Activated CD4-positive, alpha-beta T cell treated with anti-CD3 and anti-CD28 coated beads, Interleukin-2, amount 10 ng/mL, durations not matched to agents 7 days and 5 days (primary cell): ENCODE measurements at regions of chr11 and their contacts with region 1.

Region 1: GRCh38 chr11:67439321-67439883 is 1.9 kb upstream of the PTPRCAP start:
- DNase-seq: peak; percentile 48
- H3K4me3 Mint-ChIP-seq: peak overlapping the region; percentile 98
- H3K27ac Mint-ChIP-seq: peak overlapping the region; percentile 94
- H3K4me1 Mint-ChIP-seq: peaks cover 59% of the 10 kb centered on the region
- H3K27me3 Mint-ChIP-seq: no peaks in the 10 kb centered on the region

Region 2: GRCh38 chr11:67409261-67409666 is 30.1 kb before region 1 on chr11:
- CTCF ChIA-PET with region 1: interaction called, 7 read pairs
- POLR2A ChIA-PET with region 1: interaction called, 18 read pairs
- DNase-seq: peak; percentile 89
- H3K4me3 Mint-ChIP-seq: peak overlapping the region; percentile 95
- H3K27ac Mint-ChIP-seq: peak overlapping the region; percentile 94
- H3K4me1 Mint-ChIP-seq: peaks cover 81% of the 10 kb centered on the region
- H3K27me3 Mint-ChIP-seq: no peaks in the 10 kb centered on the region

Region 3: GRCh38 chr11:67420646-67421420 is 18.6 kb before region 1 on chr11:
- CTCF ChIA-PET with region 1: interaction called, 27 read pairs
- POLR2A ChIA-PET with region 1: interaction called, 7 read pairs
- DNase-seq: peak; percentile 96
- H3K4me3 Mint-ChIP-seq: peak overlapping the region; percentile 74
- H3K27ac Mint-ChIP-seq: peak overlapping the region; percentile 87
- H3K4me1 Mint-ChIP-seq: peaks cover 62% of the 10 kb centered on the region
- H3K27me3 Mint-ChIP-seq: no peaks in the 10 kb centered on the region

Region 4: DNA sequence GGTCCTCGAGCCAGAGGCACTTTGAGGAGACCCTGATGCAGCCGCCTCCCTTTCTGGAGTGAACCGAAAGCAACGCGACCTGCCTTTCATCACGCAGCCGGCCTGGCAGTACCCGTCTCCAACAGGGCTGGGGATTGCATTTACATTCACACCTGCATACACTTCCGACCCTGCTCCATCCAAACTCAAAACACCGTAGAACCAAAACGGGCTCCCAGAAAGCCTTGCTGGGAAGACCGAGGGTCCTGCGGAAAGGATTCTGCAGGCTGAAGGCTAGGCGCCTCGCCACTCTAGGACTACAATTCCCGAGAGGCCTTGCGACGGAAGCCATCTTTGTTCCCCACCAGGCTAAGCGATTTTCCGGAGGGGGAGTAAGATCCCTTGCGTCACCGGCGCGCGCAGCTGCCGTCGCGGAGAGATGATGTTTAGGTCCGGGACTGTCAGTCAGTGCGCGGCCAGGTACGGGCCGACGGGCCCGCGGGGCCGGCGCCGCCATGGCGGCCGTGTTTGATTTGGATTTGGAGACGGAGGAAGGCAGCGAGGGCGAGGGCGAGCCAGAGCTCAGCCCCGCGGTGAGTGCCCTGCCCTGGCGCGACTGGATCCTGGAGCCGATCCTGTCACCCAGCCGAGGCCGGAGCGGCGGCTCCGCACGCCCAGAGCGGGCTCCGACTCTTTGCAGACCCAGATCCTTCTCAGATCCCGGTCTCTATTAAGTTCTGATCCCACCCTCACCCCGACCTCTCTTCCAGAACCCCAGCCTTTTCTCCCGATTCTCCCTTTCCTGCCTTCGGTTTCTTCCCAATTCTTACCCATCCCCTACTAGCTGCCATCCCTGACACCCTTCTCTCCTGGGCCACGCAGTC is 11.1 kb before region 1 on chr11 and contains the start of gene RPS6KB2:
- CTCF ChIA-PET with region 1: interaction called, 18 read pairs
- POLR2A ChIA-PET with region 1: no interaction called
- DNase-seq: peak; percentile 100
- H3K4me3 Mint-ChIP-seq: peak within 1 kb of the TSS; percentile 95
- H3K27ac Mint-ChIP-seq: peak within 1 kb of the TSS; percentile 94
- H3K4me1 Mint-ChIP-seq: peaks cover 60% of the 10 kb centered on the region
- H3K27me3 Mint-ChIP-seq: no peaks in the 10 kb centered on the region
- total RNA-seq, gene RPS6KB2: 57.5 to 68.1 TPM

Region 5: DNA sequence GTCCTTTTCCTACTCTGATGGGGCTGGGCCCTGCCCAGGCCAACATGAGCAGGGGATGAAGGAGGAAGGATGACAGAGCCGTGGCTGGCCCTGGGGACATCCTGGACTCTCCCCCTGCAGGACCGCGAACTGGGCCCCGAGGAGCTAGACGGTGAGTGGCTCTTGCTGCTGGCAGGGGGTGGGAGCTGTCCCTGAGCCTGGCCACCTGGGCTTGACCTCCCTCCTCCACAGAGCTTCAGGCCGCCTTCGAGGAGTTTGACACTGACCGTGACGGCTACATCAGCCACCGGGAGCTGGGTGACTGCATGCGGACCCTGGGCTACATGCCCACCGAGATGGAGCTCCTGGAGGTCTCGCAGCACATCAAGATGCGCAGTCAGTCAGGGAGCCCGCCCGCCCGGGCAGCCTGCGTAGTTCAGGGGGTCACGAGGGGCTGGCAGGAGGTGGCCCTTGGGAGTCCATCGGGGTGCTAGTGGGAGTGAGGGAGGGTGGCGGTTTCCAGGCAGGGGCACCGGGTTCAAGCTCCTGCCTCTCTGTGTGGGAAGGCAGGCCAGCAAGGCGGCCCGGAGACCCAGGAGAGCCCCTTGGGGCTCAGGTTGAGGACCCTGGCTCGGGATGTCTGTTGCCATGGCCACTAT is 16.8 kb after region 1 on chr11:
- CTCF ChIA-PET with region 1: interaction called, 10 read pairs
- POLR2A ChIA-PET with region 1: no interaction called
- DNase-seq: no peak
- H3K4me3 Mint-ChIP-seq: no peak overlapping the region
- H3K27ac Mint-ChIP-seq: no peak overlapping the region
- H3K4me1 Mint-ChIP-seq: peaks cover 7% of the 10 kb centered on the region
- H3K27me3 Mint-ChIP-seq: no peaks in the 10 kb centered on the region